GM23248 (cell line): ENCODE measurements at regions of chr1 and their contacts with region 1.

Region 1: DNA sequence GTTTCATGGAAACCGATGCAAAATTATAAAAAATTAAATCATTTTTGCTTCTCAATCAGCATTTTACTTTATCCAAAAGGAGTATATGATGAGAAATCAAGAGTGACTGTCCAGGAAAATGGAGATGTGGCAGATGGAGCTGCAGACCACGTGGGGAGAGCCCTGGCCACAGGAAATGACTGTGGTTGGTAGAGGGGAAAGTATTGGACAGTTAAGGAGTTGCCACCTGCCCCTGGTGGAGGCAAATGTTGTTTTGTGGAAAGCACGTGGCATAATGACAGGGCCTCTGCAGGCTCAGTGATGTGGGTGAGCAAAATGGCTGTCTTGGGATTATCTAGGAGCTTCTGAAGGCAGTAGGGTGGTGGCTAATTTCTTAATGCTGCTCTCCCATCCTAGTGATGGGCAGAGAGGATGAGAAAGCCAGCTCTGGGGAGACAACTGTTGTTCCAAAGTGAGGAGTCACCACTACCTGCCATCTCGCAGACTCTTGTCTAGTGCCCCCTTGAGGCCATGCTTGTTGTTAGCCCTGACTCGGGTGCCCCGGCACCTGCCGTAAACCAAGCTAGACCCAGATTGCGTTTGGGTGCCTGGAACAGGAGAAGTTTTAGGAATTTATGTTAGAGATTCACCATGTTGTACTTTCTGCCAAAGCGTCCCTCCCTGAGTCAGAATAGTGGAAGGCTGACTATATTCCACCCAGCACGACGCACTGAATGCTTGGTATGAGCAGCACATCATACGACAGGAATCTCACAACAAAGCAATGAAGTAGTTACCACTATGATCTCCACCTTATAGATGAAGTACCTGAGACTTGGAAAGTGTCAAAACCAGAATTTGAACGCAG is 144.0 kb downstream of the ROR1 start:
- DNase-seq: peak; percentile 11
- H3K4me3 ChIP-seq: no peak overlapping the region
- H3K27ac ChIP-seq: no peak overlapping the region
- H3K4me1 ChIP-seq: peaks cover 19% of the 10 kb centered on the region
- H3K27me3 ChIP-seq: no peaks in the 10 kb centered on the region

Region 2: DNA sequence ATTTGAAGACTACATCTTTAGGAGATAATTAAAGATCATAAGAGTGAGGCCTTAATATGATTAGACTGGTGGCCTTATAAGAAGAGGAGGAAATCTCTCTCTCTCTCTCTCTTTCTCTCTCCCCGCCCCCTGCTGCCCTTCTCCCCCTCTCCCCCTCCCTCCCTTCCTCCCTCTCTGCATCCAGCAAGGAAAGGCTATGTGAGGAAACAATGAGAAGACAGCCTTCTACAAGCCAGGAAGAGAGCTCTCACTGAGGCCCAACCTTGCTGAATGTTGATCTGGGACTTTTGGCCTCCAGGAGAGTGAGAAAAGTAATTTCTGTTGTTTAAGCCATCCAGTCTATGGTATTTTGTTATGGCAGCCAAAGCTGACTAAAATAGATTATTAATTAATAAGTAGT is 573.9 kb before region 1 on chr1:
- in situ Hi-C with region 1: no loop called
- DNase-seq: no peak
- H3K4me3 ChIP-seq: no peak overlapping the region
- H3K27ac ChIP-seq: no peak overlapping the region
- H3K4me1 ChIP-seq: no peaks in the 10 kb centered on the region
- H3K27me3 ChIP-seq: no peaks in the 10 kb centered on the region; the same call in none of the 2 replicates

Region 3: DNA sequence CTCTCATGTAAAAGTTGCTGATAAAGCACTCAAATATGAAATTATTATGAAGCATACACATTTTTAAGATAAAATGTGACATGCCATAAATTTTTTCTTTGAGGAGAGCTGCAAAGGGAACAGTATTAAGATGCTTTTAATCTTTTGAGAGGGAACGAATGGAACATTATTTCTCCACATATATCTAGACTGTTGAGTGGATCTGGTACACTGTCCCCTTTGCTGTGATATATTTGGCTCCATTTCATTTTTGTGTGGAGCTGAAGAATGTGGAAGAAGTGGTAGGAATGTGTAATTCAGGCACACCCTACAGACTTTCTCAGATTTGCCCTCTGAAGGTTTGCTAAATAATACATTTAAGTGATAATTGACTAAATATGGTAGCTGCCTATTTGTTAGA is 292.9 kb before region 1 on chr1:
- in situ Hi-C with region 1: no loop called
- DNase-seq: peak; percentile 48
- H3K4me3 ChIP-seq: no peak overlapping the region
- H3K27ac ChIP-seq: no peak overlapping the region
- H3K4me1 ChIP-seq: peaks cover 33% of the 10 kb centered on the region
- H3K27me3 ChIP-seq: no peaks in the 10 kb centered on the region

Region 4: DNA sequence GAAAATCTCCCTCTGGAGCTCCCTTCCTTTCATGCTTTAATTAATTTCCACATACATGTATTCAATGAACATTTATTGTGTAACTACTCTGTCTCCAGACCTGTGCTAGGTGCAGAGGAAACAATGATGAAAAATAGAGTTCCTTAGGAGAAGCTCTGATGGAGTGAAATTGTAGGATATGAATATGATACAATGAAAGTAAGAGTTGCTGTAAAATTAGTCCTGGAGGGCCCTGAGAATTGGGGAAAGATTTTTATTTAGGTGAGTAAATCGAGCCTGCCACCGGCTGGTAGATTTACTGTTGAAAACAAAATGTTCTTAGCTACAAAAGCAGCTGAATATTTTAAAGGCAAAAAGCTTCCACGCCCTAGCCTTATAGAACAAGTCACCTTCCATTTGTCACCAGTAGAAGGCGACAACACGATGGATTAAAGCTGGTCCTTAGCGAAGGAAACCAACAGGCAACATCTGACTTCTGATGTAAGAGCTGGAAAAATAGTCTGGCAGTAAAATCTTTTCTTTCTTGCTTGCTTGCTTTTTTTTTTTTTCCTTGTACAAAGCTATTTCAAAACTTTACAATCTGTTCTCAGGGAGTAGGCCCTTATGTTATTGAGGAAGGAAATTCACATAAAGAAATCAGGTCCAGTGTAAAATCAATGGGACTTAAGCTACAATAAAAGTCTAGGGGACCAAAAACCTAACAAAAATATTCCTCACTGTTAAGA is 225.9 kb before region 1 on chr1:
- in situ Hi-C with region 1: loop called (anchors 25 kb)
- DNase-seq: peak; percentile 89
- H3K4me3 ChIP-seq: no peak overlapping the region
- H3K27ac ChIP-seq: peak overlapping the region; percentile 28
- H3K4me1 ChIP-seq: peaks cover 39% of the 10 kb centered on the region
- H3K27me3 ChIP-seq: no peaks in the 10 kb centered on the region

Region 5: DNA sequence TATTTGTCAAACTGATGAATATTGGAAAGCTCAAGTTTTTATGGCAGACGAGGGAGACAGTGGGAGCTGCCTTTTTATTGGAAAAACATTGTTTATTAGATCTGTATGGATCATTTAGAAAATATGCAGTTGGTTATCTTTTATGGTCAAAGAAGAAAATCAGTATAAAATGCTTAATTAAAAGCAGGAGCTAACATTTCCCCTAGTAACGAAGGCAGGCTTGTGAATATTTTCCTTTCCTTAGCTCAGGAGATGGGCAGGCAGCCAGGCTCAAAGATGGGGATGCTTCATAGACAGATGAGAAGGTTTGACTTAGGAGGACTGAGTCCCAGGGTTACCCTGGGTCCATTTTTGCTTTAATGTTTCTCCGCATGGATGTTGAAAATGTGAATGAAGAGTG is 118.0 kb before region 1 on chr1:
- in situ Hi-C with region 1: no loop called
- DNase-seq: peak; percentile 74
- H3K4me3 ChIP-seq: no peak overlapping the region
- H3K27ac ChIP-seq: peak overlapping the region; percentile 31
- H3K4me1 ChIP-seq: peaks cover 29% of the 10 kb centered on the region
- H3K27me3 ChIP-seq: no peaks in the 10 kb centered on the region

Region 6: GRCh38 chr1:64136752-64137411 is 219.1 kb after region 1 on chr1:
- in situ Hi-C with region 1: loop called (anchors 10 kb)
- DNase-seq: peak; percentile 89
- H3K4me3 ChIP-seq: no peak overlapping the region
- H3K27ac ChIP-seq: peak overlapping the region; percentile 45
- H3K4me1 ChIP-seq: peaks cover 44% of the 10 kb centered on the region
- H3K27me3 ChIP-seq: no peaks in the 10 kb centered on the region

Region 7: DNA sequence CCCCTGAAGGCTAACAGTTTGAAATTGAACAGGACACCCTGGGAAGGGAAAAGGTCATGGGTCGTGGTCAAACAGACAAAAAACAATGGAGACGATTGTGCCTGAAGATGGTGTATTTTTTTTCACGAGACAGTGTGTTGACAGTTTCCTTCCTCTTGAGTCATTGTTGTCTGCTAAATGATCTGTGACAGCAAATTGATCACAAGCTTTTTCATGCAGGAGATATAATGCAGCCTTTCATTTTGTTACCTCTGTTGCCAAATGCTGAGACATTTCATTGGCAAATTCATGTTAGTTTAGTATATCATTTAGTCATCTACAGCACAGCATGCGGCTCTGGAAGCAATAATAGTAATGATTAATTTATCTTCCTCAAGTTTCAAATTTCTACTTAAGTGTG is 313.4 kb after region 1 on chr1:
- in situ Hi-C with region 1: loop called (anchors 10 kb)
- DNase-seq: no peak
- H3K4me3 ChIP-seq: no peak overlapping the region
- H3K27ac ChIP-seq: no peak overlapping the region
- H3K4me1 ChIP-seq: peaks cover 9% of the 10 kb centered on the region
- H3K27me3 ChIP-seq: no peaks in the 10 kb centered on the region

Region 8: DNA sequence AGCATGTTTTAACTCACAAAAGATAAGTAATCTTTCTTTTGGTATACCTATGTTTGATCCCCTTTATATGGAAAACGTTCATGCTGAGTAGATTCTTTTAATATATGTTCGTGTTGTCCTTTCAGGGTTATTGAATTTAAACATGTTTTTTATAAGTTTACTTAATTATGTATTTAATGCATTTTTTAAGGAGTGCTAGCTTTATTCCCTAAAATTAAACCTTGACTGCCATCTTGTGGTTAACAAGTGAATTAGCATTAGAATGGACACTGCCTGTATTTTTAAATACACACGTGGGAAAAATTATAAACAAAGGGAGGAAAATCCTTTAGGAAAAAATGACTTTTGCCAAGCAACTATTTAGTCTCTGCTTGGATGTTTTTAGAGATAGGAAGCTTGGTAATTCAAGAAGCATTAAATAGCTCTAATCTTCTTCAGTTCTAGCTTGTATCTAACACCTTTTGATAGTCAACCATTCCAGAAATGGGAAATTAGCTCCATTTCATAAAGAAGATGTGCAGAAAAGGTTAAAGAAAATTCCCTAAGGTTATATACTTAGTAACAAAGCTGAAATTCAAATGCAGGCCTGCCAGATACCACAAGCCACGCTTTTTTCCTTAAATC is 328.6 kb after region 1 on chr1:
- in situ Hi-C with region 1: no loop called
- DNase-seq: peak; percentile 62
- H3K4me3 ChIP-seq: no peak overlapping the region
- H3K27ac ChIP-seq: no peak overlapping the region
- H3K4me1 ChIP-seq: peaks cover 10% of the 10 kb centered on the region; the same call in 1 of the 2 replicates
- H3K27me3 ChIP-seq: no peaks in the 10 kb centered on the region